ENCODE measurements at regions of chr2 and their contacts with region 1.

Region 1: DNA sequence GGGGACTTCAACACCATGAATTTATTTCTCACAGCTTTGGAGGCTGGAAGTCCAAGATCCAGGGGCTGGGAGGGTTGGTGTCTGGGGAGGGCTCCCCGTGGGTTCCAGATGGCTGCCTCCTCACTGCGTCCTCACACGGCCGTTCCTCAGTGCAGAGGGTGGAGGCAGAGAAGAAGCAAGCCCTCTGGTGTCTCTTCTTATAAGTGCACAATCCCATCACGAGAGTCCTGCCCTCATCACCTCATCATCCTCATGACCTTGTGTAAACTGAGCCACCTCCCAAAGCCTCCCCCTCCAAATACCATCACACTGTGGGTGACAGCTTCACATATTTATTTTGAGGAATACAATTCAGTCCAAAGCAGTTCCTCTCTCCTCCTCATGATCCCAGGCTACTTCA is 26.3 kb downstream of the TMEM163 start:
- DNase-seq: peak in 3 of 5 donors; percentile 21 to 30 (median 24)
- H3K4me3 ChIP-seq: no peak overlapping the region
- H3K4me3 Mint-ChIP-seq: no peak overlapping the region
- H3K27ac ChIP-seq: no peak overlapping the region
- H3K27ac Mint-ChIP-seq: no peak overlapping the region
- H3K4me1 ChIP-seq: peaks cover 5% of the 10 kb centered on the region
- H3K4me1 Mint-ChIP-seq: no peaks in the 10 kb centered on the region
- H3K27me3 ChIP-seq: no peaks in the 10 kb centered on the region
- H3K27me3 Mint-ChIP-seq: peaks cover 2 to 3% of the 10 kb centered on the region in 2 donors

Region 2: DNA sequence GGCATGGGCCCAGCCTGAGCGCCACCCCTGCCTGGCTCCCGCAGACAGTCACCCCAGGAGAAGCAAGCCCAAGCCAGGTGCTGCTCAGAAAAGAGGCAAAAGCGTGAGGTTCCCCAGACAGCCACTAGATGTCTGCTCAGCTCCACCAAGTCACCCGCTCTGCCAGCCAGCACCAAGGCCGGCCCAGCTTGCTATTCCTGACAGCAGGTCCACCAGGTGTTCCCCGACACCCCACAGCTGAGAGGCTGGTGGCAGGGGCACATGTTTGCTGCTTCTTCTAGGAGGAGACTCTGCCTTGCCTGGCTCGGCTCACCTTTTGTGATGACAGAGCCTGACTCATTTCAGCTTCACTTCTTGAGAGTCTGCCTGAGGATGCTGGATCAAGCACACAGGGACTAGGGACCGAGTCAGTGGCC is 231.9 kb before region 1 on chr2:
- CTCF ChIA-PET with region 1: interaction called, 4 read pairs
- POLR2A ChIA-PET with region 1: no interaction called
- intact Hi-C with region 1: loop called (anchors 10 kb)
- DNase-seq: peak in 4 of 5 donors; percentile 30 to 36 (median 34)
- H3K4me3 ChIP-seq: no peak overlapping the region
- H3K4me3 Mint-ChIP-seq: no peak overlapping the region
- H3K27ac ChIP-seq: no peak overlapping the region
- H3K27ac Mint-ChIP-seq: no peak overlapping the region
- H3K4me1 ChIP-seq: no peaks in the 10 kb centered on the region
- H3K4me1 Mint-ChIP-seq: no peaks in the 10 kb centered on the region
- H3K27me3 ChIP-seq: no peaks in the 10 kb centered on the region
- H3K27me3 Mint-ChIP-seq: no peaks in the 10 kb centered on the region

Region 3: DNA sequence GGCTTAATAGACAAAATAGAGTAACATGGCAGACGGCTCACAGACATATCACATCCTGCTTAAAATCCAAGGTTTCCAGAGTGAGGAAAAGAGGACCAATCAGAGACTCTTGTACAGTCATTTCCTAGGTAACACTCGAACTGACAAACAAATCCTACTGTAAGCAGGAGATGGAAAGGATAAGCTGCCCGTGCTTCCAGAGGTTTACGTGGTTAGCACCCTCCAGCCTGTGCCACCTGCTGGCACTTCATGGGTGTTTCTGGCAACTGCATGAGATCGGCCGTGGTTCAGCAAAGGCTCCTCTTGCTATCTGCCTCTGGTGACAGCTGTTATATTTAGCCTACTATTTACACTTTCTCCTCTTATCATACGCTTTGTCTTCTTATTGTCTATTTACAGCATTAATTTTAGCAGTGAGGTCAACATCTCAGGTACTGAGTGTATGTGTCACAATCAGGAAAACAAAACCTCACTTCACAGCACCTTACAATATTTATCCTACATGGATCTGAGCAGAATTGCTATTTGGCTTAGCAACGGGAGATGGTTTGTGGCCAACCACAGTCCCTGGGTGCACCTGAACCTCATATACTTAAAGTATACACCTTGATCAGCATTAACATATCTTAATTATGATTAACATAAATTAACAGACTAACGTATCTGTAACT is 200.6 kb before region 1 on chr2:
- CTCF ChIA-PET with region 1: no interaction called
- POLR2A ChIA-PET with region 1: no interaction called
- intact Hi-C with region 1: no loop called
- DNase-seq: no peak
- H3K4me3 ChIP-seq: no peak overlapping the region
- H3K4me3 Mint-ChIP-seq: no peak overlapping the region
- H3K27ac ChIP-seq: no peak overlapping the region
- H3K27ac Mint-ChIP-seq: no peak overlapping the region
- H3K4me1 ChIP-seq: no peaks in the 10 kb centered on the region
- H3K4me1 Mint-ChIP-seq: peaks cover 0 to 2% (median 0%) of the 10 kb centered on the region in 4 donors
- H3K27me3 ChIP-seq: no peaks in the 10 kb centered on the region
- H3K27me3 Mint-ChIP-seq: peaks cover 0 to 8% of the 10 kb centered on the region in 2 donors

Region 4: DNA sequence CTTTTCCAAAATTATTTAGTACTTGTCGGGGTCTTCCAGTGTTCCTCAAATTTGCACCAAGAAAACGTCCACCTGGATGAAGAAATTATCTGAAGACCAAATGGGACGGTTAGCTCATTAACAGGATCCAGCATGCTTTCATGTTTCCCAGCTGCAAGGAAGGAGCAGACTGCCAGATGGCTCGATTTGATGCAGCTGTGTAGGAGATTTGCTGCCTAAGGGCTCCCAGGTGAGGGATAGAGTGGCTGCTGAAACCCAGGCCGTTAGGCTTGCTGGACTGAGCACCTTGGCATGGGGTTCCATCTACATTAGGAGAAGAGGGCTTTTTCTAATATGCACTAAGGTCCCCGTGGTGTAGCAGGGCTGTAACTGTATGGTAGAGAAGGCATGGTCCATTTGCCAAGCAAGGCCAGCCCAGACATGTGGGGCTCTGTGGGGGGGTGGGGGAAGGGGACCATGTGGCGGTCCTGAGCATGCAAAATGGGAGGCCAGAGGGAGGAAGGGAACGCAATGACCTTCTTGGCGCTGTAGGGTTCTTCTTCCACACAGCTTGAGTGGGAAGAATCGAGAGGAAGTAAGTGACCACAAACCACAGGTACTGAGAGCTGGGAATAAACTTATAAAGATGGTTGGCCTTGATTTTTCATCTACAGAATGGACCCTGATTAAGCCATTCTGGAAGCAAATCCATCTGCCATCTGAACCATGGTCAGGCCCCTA is 117.7 kb before region 1 on chr2:
- CTCF ChIA-PET with region 1: no interaction called
- POLR2A ChIA-PET with region 1: no interaction called
- intact Hi-C with region 1: loop called (anchors 5 kb)
- DNase-seq: no peak
- H3K4me3 ChIP-seq: no peak overlapping the region
- H3K4me3 Mint-ChIP-seq: no peak overlapping the region
- H3K27ac ChIP-seq: no peak overlapping the region
- H3K27ac Mint-ChIP-seq: no peak overlapping the region
- H3K4me1 ChIP-seq: no peaks in the 10 kb centered on the region
- H3K4me1 Mint-ChIP-seq: no peaks in the 10 kb centered on the region
- H3K27me3 ChIP-seq: no peaks in the 10 kb centered on the region
- H3K27me3 Mint-ChIP-seq: peaks cover 0 to 3% of the 10 kb centered on the region in 2 donors

Region 5: GRCh38 chr2:134657637-134658250 is 34.8 kb before region 1 on chr2:
- CTCF ChIA-PET with region 1: interaction called, 4 read pairs
- POLR2A ChIA-PET with region 1: no interaction called
- intact Hi-C with region 1: loop called (anchors 2 kb)
- DNase-seq: peak in 4 of 5 donors; percentile 30 to 46 (median 44)
- H3K4me3 ChIP-seq: no peak overlapping the region
- H3K4me3 Mint-ChIP-seq: no peak overlapping the region
- H3K27ac ChIP-seq: no peak overlapping the region
- H3K27ac Mint-ChIP-seq: peak overlapping the region in 1 of 7 donors; percentile 37
- H3K4me1 ChIP-seq: no peaks in the 10 kb centered on the region
- H3K4me1 Mint-ChIP-seq: peaks cover 16 to 34% (median 19%) of the 10 kb centered on the region in 4 donors
- H3K27me3 ChIP-seq: no peaks in the 10 kb centered on the region
- H3K27me3 Mint-ChIP-seq: peaks cover 2 to 3% of the 10 kb centered on the region in 2 donors

Region 6: GRCh38 chr2:134736167-134736880 is 43.8 kb after region 1 on chr2:
- CTCF ChIA-PET with region 1: no interaction called
- POLR2A ChIA-PET with region 1: no interaction called
- intact Hi-C with region 1: no loop called
- DNase-seq: no peak
- H3K4me3 ChIP-seq: no peak overlapping the region
- H3K4me3 Mint-ChIP-seq: no peak overlapping the region
- H3K27ac ChIP-seq: no peak overlapping the region
- H3K27ac Mint-ChIP-seq: no peak overlapping the region
- H3K4me1 ChIP-seq: no peaks in the 10 kb centered on the region
- H3K4me1 Mint-ChIP-seq: no peaks in the 10 kb centered on the region
- H3K27me3 ChIP-seq: no peaks in the 10 kb centered on the region
- H3K27me3 Mint-ChIP-seq: peaks cover 13 to 17% of the 10 kb centered on the region in 2 donors

Region 7: GRCh38 chr2:134819334-134819733 is 126.8 kb after region 1 on chr2:
- CTCF ChIA-PET with region 1: no interaction called
- POLR2A ChIA-PET with region 1: no interaction called
- intact Hi-C with region 1: no loop called
- DNase-seq: no peak
- H3K4me3 ChIP-seq: no peak overlapping the region
- H3K4me3 Mint-ChIP-seq: no peak overlapping the region
- H3K27ac ChIP-seq: no peak overlapping the region
- H3K27ac Mint-ChIP-seq: peak overlapping the region in 1 of 7 donors; percentile 30
- H3K4me1 ChIP-seq: no peaks in the 10 kb centered on the region
- H3K4me1 Mint-ChIP-seq: no peaks in the 10 kb centered on the region
- H3K27me3 ChIP-seq: no peaks in the 10 kb centered on the region
- H3K27me3 Mint-ChIP-seq: peaks cover 8 to 23% of the 10 kb centered on the region in 2 donors

Measured in CD4-positive, alpha-beta memory T cell (primary cell).